HAP-1 (cell line): ENCODE measurements at regions of chr16 and their contacts with region 1.

Region 1: GRCh38 chr16:4350787-4351659 is at the start of gene PAM16:
- DNase-seq: peak; percentile 95 to 99
- H3K4me3 ChIP-seq: peak within 1 kb of the TSS; percentile 86
- H3K4me1 ChIP-seq: peaks cover 4% of the 10 kb centered on the region
- H3K27me3 ChIP-seq: no peaks in the 10 kb centered on the region

Region 2: DNA sequence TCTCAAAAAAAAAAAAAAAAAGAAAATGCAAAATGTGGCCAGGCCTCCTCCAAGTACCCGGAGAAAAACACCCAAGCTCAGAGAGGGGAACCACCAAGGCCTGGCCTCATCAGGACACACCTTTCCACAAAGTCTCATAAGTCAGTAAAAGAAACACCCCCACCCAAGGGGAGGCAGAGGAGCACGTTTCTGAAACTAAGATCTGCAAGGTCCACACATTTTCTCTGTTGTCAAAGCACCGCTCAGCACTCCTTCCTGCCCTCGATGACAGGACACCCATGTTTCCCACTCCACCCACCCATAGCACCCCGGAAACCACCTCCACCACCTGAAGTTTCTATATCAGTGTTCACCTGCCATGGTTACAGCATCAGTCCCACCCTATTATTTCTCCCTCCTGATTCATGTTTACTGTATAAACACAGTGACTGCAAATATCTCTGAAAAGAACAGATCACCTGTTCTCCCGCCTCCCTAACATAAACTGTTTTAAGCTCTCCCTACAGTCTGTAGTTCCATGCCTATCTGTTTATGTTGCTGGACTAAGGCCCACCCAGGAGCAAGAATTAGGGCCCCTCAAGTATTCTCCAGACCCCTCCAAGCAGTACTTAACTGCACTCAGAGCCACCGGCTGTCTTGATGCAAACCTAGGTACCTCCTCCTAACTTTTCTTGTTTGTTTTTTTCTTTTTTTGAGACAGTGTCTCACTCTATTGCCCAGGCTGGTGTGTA is 63.3 kb after region 1 on chr16:
- in situ Hi-C with region 1: loop called (anchors 5 kb)
- DNase-seq: no peak
- H3K4me3 ChIP-seq: no peak overlapping the region
- H3K4me1 ChIP-seq: peaks cover 13% of the 10 kb centered on the region
- H3K27me3 ChIP-seq: no peaks in the 10 kb centered on the region